ENCODE measurements at regions of chr14 and their contacts with region 1.

Region 1: GRCh38 chr14:92951912-92952471 is 29.0 kb downstream of the CHGA start:
- DNase-seq: peak; percentile 95
- CTCF ChIP-seq: peak; percentile 96

Region 2: DNA sequence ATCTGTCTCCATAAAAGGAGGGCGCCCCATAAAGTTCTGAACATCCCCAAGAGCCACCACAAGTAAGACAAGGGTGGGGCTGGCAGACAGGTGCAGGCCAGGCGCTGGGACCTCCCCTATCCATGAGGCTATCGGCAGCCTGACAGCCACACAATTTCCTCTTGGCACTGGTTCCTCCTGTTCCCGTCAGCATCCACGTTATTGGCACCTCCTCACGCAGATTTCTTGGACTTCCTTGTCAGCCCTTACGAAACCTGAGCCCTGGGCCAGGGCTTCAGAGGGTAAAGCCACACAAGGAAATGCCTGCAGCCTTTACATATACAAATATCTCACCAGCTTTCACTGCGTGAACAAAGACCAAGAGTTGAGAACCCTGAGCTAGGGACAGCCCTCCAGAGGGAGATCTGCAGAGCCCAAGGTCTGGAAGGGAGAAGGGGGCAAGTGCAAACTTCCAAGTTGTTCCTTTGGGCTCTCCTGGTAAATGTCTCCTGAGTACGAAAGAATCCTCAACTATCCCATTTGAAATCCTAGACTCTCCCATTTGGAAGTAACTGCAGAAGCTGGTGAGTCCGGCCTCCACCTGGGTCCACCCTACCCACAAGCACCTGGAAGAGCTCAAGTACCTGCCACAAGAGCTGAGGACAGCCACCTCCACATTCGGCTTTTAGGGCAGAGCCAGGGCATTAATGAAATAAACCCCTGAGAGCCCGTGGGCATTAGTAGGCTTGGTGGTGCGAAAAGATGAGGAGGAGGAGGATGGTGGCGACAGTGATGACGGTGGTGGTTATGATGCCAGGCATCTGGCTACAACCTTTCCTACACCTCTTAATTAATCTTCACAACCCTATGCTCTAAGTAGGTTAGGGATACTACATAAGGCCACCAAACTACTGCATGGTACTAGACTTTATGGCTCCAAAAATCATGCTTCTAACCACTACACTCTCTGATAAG is 1079.2 kb before region 1 on chr14:
- in situ Hi-C with region 1: no loop called
- DNase-seq: no peak
- CTCF ChIP-seq: no peak

Region 3: DNA sequence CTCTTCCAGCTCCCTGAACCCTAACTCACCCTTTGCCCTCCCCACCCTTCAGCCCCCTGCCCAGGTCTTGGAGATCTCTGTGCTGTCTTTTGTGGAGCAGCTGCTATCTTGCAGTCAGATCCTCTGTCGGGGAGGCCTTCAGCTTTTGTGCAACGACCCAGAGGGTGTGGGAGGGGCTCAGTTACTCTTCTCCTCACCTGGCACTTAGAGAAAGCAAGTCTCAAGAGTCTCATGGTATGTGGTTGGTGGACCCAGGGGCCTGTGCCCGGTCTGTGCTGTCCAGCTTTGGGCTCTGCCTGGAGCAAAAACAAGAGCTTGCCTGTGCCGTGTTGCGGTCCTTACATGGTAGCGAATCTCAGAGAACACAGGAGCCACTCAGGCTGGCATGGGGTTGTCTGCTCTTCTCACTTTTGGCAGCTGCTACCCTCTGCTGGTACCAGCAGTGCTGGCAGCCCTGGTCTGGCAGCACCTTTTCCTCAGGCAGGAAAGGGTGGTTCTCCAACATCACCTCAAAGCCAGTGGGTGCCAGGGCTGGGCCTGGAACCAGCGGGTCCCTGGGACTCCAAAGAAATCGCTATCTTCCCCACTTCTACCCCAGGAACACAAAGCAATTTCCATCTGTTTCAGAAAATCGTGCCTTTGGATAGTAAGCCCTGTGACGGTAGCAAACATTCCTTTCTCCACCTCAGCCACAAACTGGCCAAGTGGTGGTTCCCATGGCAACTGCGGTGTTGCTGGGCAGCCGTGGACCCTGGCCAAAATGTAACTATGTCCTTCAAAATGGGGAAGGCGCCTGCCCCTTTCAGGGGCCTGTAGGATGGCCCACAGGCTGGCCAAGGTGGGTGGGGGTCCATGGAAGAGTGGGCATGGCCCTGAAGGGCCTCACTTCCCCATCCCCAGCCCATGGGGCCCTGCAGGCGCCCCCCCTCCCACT is 348.4 kb before region 1 on chr14:
- in situ Hi-C with region 1: no loop called
- DNase-seq: no peak
- CTCF ChIP-seq: peak; percentile 14

Region 4: GRCh38 chr14:93132470-93133065 is 180.6 kb after region 1 on chr14:
- in situ Hi-C with region 1: loop called (anchors 10 kb)
- DNase-seq: peak; percentile 63
- CTCF ChIP-seq: peak; percentile 43

Region 5: GRCh38 chr14:93316479-93317080 is 364.6 kb after region 1 on chr14:
- in situ Hi-C with region 1: no loop called
- DNase-seq: no peak
- CTCF ChIP-seq: no peak